ENCODE measurements at regions of chr4 and their contacts with region 1.

Region 1: DNA sequence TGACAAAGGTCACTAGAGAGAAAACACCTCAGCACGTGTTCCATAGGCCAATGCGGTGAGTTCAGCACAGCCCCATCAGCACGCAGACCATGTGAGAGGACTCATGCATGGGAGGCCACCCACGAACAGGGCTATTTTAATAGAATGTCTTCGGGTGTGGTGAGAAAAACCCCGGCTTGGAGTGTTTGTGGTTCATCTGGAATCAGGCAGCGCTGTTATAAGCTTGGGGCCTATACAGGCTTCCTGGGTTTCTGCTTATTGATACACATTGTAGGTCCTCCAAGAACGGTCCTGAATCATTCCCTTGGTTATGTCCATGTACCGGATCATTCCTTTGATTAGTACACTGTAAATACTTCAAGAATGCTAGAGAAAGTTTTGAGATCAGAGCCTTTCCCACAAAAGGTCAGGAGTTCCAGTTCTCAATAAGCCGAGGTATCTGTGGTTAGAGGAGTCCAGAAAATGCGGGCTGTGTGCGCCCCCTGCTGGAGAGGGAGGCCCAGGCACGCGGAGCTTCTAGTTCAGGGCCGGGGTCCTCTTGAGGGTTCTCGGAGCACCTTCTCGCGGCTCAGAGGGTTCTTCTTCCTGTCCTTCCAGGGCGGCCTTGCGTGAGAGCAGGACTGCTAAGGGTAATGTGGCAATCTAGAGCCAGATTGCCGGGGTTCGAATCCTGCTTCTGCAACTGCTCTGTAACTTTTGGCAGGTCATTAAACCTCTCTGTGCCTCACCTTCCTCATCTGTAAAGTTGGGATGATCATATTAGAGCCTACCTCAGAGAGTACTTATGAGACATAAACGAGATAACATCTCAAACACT is 51.8 kb downstream of the TLR10 start:
- DNase-seq: peak; percentile 93
- H3K4me3 Mint-ChIP-seq: no peak overlapping the region
- H3K27ac Mint-ChIP-seq: no peak overlapping the region
- H3K4me1 Mint-ChIP-seq: peaks cover 16% of the 10 kb centered on the region
- H3K27me3 Mint-ChIP-seq: no peaks in the 10 kb centered on the region

Region 2: DNA sequence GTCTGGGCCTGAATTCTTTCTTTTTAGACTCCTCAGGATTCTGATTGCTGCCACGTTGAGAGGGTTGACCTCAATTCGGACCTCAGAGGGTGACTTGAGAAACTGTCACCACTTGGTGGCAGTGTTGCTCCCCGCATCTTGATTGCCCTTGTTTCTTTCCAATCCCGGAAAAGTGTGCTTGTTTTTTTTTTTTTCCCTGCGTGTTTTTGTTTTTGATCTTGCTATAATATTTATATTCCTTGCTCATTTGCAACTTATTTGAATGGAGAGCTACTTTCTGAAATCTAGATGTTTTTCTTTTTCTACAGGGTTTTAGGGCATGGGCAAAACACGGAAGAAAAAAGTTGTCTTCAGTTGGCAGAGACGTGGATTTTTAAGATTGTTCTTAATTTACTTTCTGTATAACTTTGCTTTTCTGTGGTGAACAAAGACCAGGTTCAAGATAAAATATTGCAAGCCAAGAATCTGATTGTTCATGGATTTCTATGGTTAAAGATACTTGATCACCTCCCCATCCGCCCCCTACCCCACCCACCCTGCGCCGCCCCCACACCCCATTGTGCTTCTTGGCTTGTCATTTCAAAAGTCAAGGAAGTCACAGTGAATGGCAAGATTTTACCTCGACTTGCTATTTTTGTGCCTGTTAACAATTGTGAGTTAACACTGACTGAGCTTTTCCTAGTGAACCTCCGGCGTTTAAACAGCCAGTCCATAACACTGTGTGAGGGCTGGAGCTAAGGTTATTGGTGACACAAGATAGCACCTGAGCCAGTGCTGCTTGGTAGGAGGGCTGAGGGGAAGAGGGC is 668.7 kb before region 1 on chr4:
- CTCF ChIA-PET with region 1: interaction called, 8 read pairs
- intact Hi-C with region 1: loop called (anchors 1 kb)
- DNase-seq: peak; percentile 84
- H3K4me3 Mint-ChIP-seq: peak overlapping the region; percentile 79
- H3K27ac Mint-ChIP-seq: peak overlapping the region; percentile 75
- H3K4me1 Mint-ChIP-seq: peaks cover 12% of the 10 kb centered on the region
- H3K27me3 Mint-ChIP-seq: no peaks in the 10 kb centered on the region

Region 3: DNA sequence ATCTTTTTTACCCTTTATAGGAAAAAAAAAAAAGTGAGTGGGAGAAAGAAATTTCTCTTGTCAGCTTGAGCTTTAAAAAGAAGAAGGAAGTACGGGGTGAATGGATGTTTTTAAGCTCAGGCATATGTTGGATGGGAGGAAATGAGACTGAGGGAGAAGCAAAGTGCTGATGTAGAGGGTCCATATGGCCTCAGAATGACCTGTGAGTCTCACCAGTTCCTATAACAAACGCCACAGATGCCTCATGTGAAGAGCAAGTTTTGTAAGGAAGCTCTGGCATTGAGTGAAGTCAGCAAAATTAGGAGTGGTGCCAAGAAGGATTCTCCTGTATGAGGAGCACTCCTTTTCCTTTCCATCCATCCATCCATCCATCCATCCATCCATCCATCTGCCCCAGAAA is 556.2 kb before region 1 on chr4:
- CTCF ChIA-PET with region 1: interaction called, 90 read pairs
- intact Hi-C with region 1: loop called (anchors 1 kb)
- DNase-seq: no peak
- H3K4me3 Mint-ChIP-seq: no peak overlapping the region
- H3K27ac Mint-ChIP-seq: peak overlapping the region; percentile 14
- H3K4me1 Mint-ChIP-seq: peaks cover 42% of the 10 kb centered on the region
- H3K27me3 Mint-ChIP-seq: no peaks in the 10 kb centered on the region

Region 4: GRCh38 chr4:38319456-38320342 is 411.3 kb before region 1 on chr4:
- CTCF ChIA-PET with region 1: interaction called, 4 read pairs
- intact Hi-C with region 1: loop called (anchors 1 kb)
- DNase-seq: peak; percentile 98
- H3K4me3 Mint-ChIP-seq: peak overlapping the region; percentile 76
- H3K27ac Mint-ChIP-seq: peak overlapping the region; percentile 89
- H3K4me1 Mint-ChIP-seq: peaks cover 46% of the 10 kb centered on the region
- H3K27me3 Mint-ChIP-seq: no peaks in the 10 kb centered on the region

Region 5: DNA sequence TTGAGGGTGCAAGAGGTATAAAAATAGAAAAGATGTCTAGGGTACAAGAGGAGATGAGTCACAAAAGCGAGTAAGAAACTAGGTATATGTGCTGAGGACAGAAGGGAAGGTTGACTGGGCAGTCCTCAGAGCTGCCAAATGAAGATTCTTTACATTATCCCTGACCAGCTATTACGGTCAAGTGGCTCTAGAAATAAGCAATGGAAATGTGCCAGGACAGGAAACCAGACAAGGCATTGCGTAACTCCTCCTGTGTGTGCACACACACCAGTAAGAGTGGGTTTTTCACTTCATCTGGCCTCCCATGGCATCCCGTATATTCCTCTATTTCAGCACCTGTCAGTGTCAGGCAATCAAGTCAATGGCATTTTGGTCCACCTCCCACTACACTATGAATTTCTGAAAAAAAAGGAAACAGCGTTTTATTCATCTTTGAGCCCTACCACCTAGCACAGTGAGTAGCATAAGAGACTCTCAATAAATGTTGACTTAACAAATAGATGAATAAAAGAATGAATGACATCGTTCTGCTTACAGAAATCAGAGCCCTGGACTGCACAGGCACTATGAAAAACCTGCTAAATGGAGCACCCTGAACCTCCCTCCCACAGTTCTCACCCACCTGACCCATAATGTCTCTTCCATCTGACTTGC is 129.7 kb before region 1 on chr4:
- CTCF ChIA-PET with region 1: no interaction called
- intact Hi-C with region 1: loop called (anchors 5 kb)
- DNase-seq: no peak
- H3K4me3 Mint-ChIP-seq: no peak overlapping the region
- H3K27ac Mint-ChIP-seq: no peak overlapping the region
- H3K4me1 Mint-ChIP-seq: peaks cover 20% of the 10 kb centered on the region
- H3K27me3 Mint-ChIP-seq: no peaks in the 10 kb centered on the region

Region 6: GRCh38 chr4:38930204-38930603 is 199.2 kb after region 1 on chr4:
- CTCF ChIA-PET with region 1: no interaction called
- intact Hi-C with region 1: no loop called
- DNase-seq: no peak
- H3K4me3 Mint-ChIP-seq: no peak overlapping the region
- H3K27ac Mint-ChIP-seq: no peak overlapping the region
- H3K4me1 Mint-ChIP-seq: no peaks in the 10 kb centered on the region
- H3K27me3 Mint-ChIP-seq: no peaks in the 10 kb centered on the region